Prostate gland (tissue), 2 donors: ENCODE measurements at regions of chr19 and their contacts with region 1.

Region 1: GRCh38 chr19:4208385-4209094 is 20.8 kb upstream of the EBI3 start:
- DNase-seq: no peak
- H3K4me3 ChIP-seq: no peak overlapping the region
- H3K27ac ChIP-seq: no peak overlapping the region
- H3K4me1 ChIP-seq: no peaks in the 10 kb centered on the region
- H3K27me3 ChIP-seq: no peaks in the 10 kb centered on the region
- CTCF ChIP-seq: peak in 3 of 4 experiments; percentile 13 to 21 (median 17)
- POLR2A ChIP-seq: no peak

Region 2: GRCh38 chr19:4139614-4140236 is 68.8 kb before region 1 on chr19:
- intact Hi-C with region 1: loop called (anchors 10 kb)
- DNase-seq: peak; percentile 53
- H3K4me3 ChIP-seq: no peak overlapping the region
- H3K27ac ChIP-seq: no peak overlapping the region
- H3K4me1 ChIP-seq: no peaks in the 10 kb centered on the region
- H3K27me3 ChIP-seq: no peaks in the 10 kb centered on the region
- CTCF ChIP-seq: peak; percentile 54 to 74 (median 66)
- POLR2A ChIP-seq: no peak